ENCODE measurements at regions of chr7 and their contacts with region 1.

Region 1: GRCh38 chr7:48109848-48110663 is 21.0 kb downstream of the UPP1 start:
- DNase-seq: peak; percentile 57 to 77 (median 64)
- H3K4me3 ChIP-seq: no peak overlapping the region
- H3K4me3 Mint-ChIP-seq: no peak overlapping the region
- H3K27ac ChIP-seq: peak overlapping the region in 1 of 2 donors; percentile 61
- H3K27ac Mint-ChIP-seq: peak overlapping the region; percentile 21 to 89 (median 69)
- H3K4me1 ChIP-seq: no peaks in the 10 kb centered on the region
- H3K4me1 Mint-ChIP-seq: peaks cover 6% of the 10 kb centered on the region
- H3K27me3 ChIP-seq: no peaks in the 10 kb centered on the region
- H3K27me3 Mint-ChIP-seq: peaks cover 0 to 1% (median 1%) of the 10 kb centered on the region in 3 donors
- CTCF ChIP-seq: peak; percentile 99

Region 2: DNA sequence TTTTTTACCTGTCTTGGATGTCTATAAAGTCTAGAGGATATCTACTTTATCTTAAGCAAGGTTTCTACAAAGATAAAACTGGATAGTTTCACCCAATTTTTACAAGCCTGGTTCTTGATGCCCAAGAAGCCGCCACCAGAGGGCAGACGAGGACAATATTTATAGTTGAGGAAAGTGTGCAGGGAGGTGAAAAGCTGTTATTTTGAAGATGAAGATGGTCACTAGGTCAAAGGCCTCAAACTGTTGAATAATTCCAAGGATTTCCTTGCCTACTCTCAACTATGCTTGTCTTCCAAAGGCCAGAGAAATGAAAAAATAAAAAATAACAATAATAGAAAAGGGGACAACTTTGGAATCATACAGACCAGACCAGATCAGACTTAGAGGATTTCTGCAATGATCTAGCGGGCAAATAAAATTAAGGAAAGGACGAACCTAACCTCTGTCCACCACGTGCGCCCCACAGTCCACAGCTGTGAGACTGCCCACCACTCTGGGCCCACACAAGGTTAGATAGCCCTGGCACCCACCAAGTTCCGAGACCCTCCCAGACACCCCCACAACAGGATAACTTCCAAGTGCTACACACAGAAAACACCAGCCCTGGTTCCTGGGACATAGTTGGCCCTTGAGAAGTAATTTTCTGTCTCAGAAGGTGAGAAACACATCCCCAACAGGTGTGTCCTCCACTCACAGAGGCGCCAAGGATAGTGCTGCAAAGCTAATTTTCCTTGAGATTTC is 164.6 kb before region 1 on chr7:
- intact Hi-C with region 1: loop called (anchors 2 to 5 kb)
- DNase-seq: peak; percentile 52 to 64 (median 61)
- H3K4me3 ChIP-seq: no peak overlapping the region
- H3K4me3 Mint-ChIP-seq: no peak overlapping the region
- H3K27ac ChIP-seq: no peak overlapping the region
- H3K27ac Mint-ChIP-seq: peak overlapping the region in 1 of 7 donors; percentile 23
- H3K4me1 ChIP-seq: peaks cover 16 to 18% of the 10 kb centered on the region in 2 donors
- H3K4me1 Mint-ChIP-seq: peaks cover 17% of the 10 kb centered on the region
- H3K27me3 ChIP-seq: no peaks in the 10 kb centered on the region
- H3K27me3 Mint-ChIP-seq: peaks cover 4 to 7% (median 4%) of the 10 kb centered on the region in 3 donors
- CTCF ChIP-seq: peak; percentile 81

Region 3: GRCh38 chr7:47991741-47992311 is 118.2 kb before region 1 on chr7:
- intact Hi-C with region 1: loop called (anchors 1 to 5 kb)
- DNase-seq: peak; percentile 72 to 75 (median 75)
- H3K4me3 ChIP-seq: peak overlapping the region; percentile 52 to 87 (median 56)
- H3K4me3 Mint-ChIP-seq: peak overlapping the region; percentile 97 to 100
- H3K27ac ChIP-seq: peak overlapping the region; percentile 36 to 83
- H3K27ac Mint-ChIP-seq: peak overlapping the region; percentile 88 to 95 (median 92)
- H3K4me1 ChIP-seq: peaks cover 6 to 12% of the 10 kb centered on the region in 2 donors
- H3K4me1 Mint-ChIP-seq: peaks cover 18% of the 10 kb centered on the region
- H3K27me3 ChIP-seq: no peaks in the 10 kb centered on the region
- H3K27me3 Mint-ChIP-seq: peaks cover 0 to 3% (median 0%) of the 10 kb centered on the region in 3 donors
- CTCF ChIP-seq: peak; percentile 73

Region 4: DNA sequence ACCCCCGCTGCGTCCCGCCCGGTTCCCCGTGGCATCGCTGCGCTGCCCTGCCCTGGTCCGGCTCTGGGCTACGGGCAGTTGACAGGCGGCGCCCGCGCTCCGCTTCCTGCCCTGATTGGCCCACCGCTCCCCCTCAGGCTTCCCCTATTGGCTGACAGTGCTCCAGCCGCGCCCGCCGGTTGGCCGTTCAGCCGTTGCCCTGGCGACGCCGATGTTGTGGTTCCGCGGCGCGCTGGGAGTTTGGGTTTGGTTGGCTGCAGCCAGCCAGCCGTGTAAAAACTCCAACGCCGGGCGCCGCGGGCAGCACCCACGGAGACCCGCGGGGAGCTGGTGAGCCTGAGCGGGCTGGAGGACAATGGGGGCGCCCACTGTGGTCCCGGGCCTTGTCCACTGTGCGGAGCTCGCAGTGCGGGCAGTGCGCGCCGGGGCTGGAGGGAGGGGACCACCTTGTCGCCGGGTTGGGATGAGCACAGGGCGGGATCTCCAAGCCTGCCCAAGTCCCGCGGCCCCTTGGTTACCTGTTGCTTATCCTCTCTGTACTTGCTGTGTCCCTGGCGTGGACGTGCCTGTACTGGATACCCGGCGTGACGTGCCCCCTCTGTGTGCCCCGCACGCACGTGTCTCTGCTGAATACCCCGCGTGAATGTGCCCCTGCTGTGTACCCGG is 74.6 kb before region 1 on chr7 and contains the start of gene C7orf57:
- intact Hi-C with region 1: loop called in 1 of 2 experiments (anchors 5 kb)
- DNase-seq: peak; percentile 89 to 95 (median 91)
- H3K4me3 ChIP-seq: peak within 1 kb of the TSS; percentile 39 to 78 (median 45)
- H3K4me3 Mint-ChIP-seq: peak within 1 kb of the TSS; percentile 78 to 92
- H3K27ac ChIP-seq: no peak within 1 kb of the TSS
- H3K27ac Mint-ChIP-seq: peak within 1 kb of the TSS in 6 of 7 donors; percentile 10 to 90 (median 78)
- H3K4me1 ChIP-seq: peaks cover 10 to 15% of the 10 kb centered on the region in 2 donors
- H3K4me1 Mint-ChIP-seq: peaks cover 12% of the 10 kb centered on the region
- H3K27me3 ChIP-seq: peaks cover 27 to 54% of the 10 kb centered on the region in 2 donors
- H3K27me3 Mint-ChIP-seq: peaks cover 47 to 61% (median 59%) of the 10 kb centered on the region in 3 donors
- CTCF ChIP-seq: no peak
- polyA plus RNA-seq, gene C7orf57: 0.05 TPM in 1 of 3 donors, not detected in the others

Region 5: GRCh38 chr7:48053736-48054135 is 56.3 kb before region 1 on chr7:
- intact Hi-C with region 1: no loop called
- DNase-seq: no peak
- H3K4me3 ChIP-seq: no peak overlapping the region
- H3K4me3 Mint-ChIP-seq: no peak overlapping the region
- H3K27ac ChIP-seq: no peak overlapping the region
- H3K27ac Mint-ChIP-seq: no peak overlapping the region
- H3K4me1 ChIP-seq: peaks cover under 1 to 7% of the 10 kb centered on the region in 2 donors
- H3K4me1 Mint-ChIP-seq: peaks cover 12% of the 10 kb centered on the region
- H3K27me3 ChIP-seq: no peaks in the 10 kb centered on the region
- H3K27me3 Mint-ChIP-seq: peaks cover 1 to 3% (median 3%) of the 10 kb centered on the region in 3 donors
- CTCF ChIP-seq: no peak

Region 6: GRCh38 chr7:48074204-48074654 is 35.8 kb before region 1 on chr7:
- intact Hi-C with region 1: loop called in 1 of 2 experiments (anchors 5 kb)
- DNase-seq: peak in 2 of 3 donors; percentile 19 to 45
- H3K4me3 ChIP-seq: no peak overlapping the region
- H3K4me3 Mint-ChIP-seq: no peak overlapping the region
- H3K27ac ChIP-seq: no peak overlapping the region
- H3K27ac Mint-ChIP-seq: peak overlapping the region in 1 of 7 donors; percentile 32
- H3K4me1 ChIP-seq: peaks cover 12 to 17% of the 10 kb centered on the region in 2 donors
- H3K4me1 Mint-ChIP-seq: peaks cover 23% of the 10 kb centered on the region
- H3K27me3 ChIP-seq: no peaks in the 10 kb centered on the region
- H3K27me3 Mint-ChIP-seq: peaks cover 0 to 2% (median 2%) of the 10 kb centered on the region in 3 donors
- CTCF ChIP-seq: no peak